Endothelial cell of umbilical vein (primary cell): ENCODE measurements at regions of chr10 and their contacts with region 1.

Region 1: GRCh38 chr10:8873310-8873709 is 818.8 kb downstream of the GATA3 start:
- DNase-seq: peak; percentile 22
- H3K4me3 ChIP-seq: no peak overlapping the region
- H3K27ac ChIP-seq: no peak overlapping the region
- H3K4me1 ChIP-seq: no peaks in the 10 kb centered on the region
- H3K27me3 ChIP-seq: no peaks in the 10 kb centered on the region
- CTCF ChIP-seq: no peak
- POLR2A ChIP-seq: no peak

Region 2: DNA sequence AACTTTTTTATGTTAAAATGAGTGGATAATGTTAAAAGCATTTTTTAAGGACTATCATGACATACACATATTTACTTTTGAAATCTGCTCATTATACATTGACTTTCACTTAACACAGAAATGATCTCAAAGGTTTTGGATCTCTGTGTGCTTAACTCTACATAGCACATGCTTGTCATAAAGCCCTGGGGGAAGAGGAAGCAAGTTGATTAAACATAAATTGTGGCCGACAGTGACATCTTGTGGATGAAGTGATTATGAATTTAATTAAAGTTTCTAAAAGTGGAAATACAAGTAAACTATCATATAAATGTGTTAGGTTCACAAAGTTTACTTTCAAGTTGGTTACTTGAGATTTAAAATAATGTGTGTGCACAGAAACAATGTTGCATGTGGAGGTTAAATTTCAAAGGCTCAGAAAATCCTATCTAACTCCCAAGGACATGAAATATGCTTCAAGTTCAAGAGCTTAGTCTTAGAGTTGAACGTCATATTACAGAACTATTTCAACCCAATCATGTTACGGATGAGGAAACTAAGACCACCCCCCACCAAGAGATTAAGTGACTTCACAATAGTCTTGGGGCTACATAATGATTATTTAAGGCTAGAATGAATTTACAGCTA is 428.9 kb after region 1 on chr10:
- CTCF ChIA-PET with region 1: no interaction called
- POLR2A ChIA-PET with region 1: no interaction called
- dilution Hi-C with region 1: no loop called
- intact Hi-C with region 1: loop called (anchors 10 kb)
- DNase-seq: peak; percentile 79
- H3K4me3 ChIP-seq: no peak overlapping the region
- H3K27ac ChIP-seq: no peak overlapping the region
- H3K4me1 ChIP-seq: no peaks in the 10 kb centered on the region
- H3K27me3 ChIP-seq: peaks cover 0 to 2% of the 10 kb centered on the region in 2 experiments
- CTCF ChIP-seq: peak in 1 of 2 donors; percentile 8
- POLR2A ChIP-seq: no peak